B cell (primary cell): ENCODE measurements at regions of chr1 and their contacts with region 1.

Region 1: GRCh38 chr1:45490626-45491486 is at the start of gene TESK2:
- DNase-seq: peak; percentile 99
- ATAC-seq: peak; percentile 88
- H3K4me3 ChIP-seq: peak within 1 kb of the TSS; percentile 67 to 88 (median 83)
- H3K4me3 Mint-ChIP-seq: no peak within 1 kb of the TSS
- H3K27ac ChIP-seq: peak within 1 kb of the TSS; percentile 60 to 80
- H3K27ac Mint-ChIP-seq: no peak within 1 kb of the TSS
- H3K4me1 ChIP-seq: peaks cover 28% of the 10 kb centered on the region in 2 donors
- H3K4me1 Mint-ChIP-seq: peaks cover 22% of the 10 kb centered on the region
- H3K27me3 ChIP-seq: no peaks in the 10 kb centered on the region
- H3K27me3 Mint-ChIP-seq: no peaks in the 10 kb centered on the region
- CTCF ChIP-seq: peak; percentile 7
- total RNA-seq, gene TESK2: 26.2 and 27.0 TPM in 2 replicates

Region 2: DNA sequence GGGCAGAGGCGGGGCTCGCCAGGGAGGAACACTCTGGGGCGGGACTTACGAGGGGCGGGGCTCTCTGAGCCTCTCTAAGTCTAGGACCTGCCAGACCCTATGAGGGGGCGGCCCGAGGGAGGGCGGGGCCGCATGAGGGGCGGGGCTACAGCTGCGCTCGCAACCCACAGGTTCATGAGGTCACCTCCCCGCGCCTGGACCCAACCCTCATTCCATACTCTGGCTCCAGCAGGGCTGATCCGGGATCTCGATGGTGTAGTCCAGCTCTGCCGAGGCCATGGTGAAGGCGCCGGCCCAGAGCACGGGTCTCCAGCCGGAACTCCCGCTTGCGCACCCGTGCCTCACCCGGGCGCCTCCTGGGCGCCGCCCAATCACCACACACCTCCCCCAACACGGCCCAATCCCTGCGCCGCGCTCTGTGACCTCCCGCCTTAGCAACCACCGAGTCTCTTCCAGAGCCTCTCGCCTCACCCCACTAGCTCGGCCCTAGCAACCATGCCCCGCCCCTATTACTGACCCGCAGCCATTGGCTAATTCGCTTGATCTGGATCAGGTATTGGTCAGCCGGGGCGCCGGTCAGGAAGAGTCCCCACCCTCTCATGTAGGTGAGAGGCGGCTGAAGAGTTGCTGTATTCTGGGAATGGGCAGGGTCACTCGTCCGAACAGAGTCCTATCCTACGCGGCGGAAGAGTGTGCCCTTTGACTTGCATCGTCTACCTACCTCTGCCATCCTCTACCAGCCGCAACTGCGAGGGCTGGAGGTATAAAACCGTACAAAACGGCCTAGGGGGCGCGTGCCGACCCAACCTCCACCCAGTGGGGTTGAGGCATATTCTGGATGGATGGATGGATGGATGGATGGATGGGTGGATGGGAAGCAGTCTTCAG is 816.5 kb before region 1 on chr1 and contains the starts of genes ARMH1 and TMEM53:
- CTCF ChIA-PET with region 1: no interaction called
- POLR2A ChIA-PET with region 1: no interaction called
- intact Hi-C with region 1: loop called (anchors 1 kb)
- DNase-seq: peak; percentile 99
- ATAC-seq: peak; percentile 91
- H3K4me3 ChIP-seq: peak within 1 kb of the TSS; percentile 70 to 88 (median 84)
- H3K4me3 Mint-ChIP-seq: peak within 1 kb of the TSS; percentile 91
- H3K27ac ChIP-seq: peak within 1 kb of the TSS; percentile 87 to 94
- H3K27ac Mint-ChIP-seq: peak within 1 kb of the TSS; percentile 96
- H3K4me1 ChIP-seq: peaks cover 34 to 50% of the 10 kb centered on the region in 2 donors
- H3K4me1 Mint-ChIP-seq: peaks cover 35% of the 10 kb centered on the region
- H3K27me3 ChIP-seq: no peaks in the 10 kb centered on the region
- H3K27me3 Mint-ChIP-seq: no peaks in the 10 kb centered on the region
- CTCF ChIP-seq: no peak
- total RNA-seq, gene ARMH1: 10.2 and 11.4 TPM in 2 replicates
- total RNA-seq, gene TMEM53: 5.3 and 6.8 TPM in 2 replicates

Region 3: DNA sequence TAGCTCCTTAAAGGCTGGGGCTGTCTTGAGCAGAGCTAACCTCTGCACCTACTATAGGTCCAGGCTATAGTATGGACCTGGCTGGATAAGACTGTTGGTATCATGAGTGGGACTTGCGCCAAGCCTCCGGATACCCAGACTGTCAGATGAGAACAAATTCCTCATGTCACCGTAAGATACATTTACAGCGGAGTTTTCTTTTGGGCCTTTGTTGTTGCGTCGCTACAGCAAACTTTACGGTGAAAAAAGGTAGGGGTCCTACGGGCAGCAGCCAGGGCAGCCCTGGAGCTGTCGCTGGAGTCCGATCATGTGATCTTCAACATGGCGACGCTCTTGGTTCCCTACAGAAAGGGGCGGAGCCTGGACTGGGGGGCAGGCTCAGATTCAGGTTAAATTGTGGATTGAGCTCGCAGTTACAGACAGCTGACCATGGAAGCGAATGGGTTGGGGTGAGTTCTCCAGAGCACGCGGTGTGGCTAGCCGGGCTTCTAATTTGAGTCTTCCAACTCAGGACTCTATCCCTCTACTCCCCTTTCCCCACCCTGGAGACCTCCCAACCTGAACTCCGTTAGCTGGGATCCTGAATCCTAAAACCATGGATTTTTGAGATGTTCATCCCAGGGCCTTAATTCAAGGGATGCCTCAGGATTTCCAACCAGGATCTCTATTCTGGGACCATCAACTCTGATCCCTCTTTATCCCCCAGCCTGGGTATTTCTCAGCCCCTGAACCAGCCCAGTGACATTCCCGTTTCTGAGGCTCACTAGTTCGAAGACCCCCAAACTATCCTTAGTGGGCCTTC is 478.8 kb before region 1 on chr1 and contains the start of gene UROD:
- CTCF ChIA-PET with region 1: interaction called, 154 read pairs
- POLR2A ChIA-PET with region 1: interaction called, 5 read pairs
- intact Hi-C with region 1: no loop called
- DNase-seq: peak; percentile 94
- ATAC-seq: peak; percentile 83
- H3K4me3 ChIP-seq: peak within 1 kb of the TSS; percentile 59 to 89 (median 78)
- H3K4me3 Mint-ChIP-seq: peak within 1 kb of the TSS; percentile 91
- H3K27ac ChIP-seq: peak within 1 kb of the TSS; percentile 66 to 79
- H3K27ac Mint-ChIP-seq: peak within 1 kb of the TSS; percentile 89
- H3K4me1 ChIP-seq: peaks cover 31 to 42% of the 10 kb centered on the region in 2 donors
- H3K4me1 Mint-ChIP-seq: peaks cover 43% of the 10 kb centered on the region
- H3K27me3 ChIP-seq: no peaks in the 10 kb centered on the region
- H3K27me3 Mint-ChIP-seq: no peaks in the 10 kb centered on the region
- CTCF ChIP-seq: no peak
- total RNA-seq, gene UROD: 57.3 and 65.5 TPM in 2 replicates

Region 4: DNA sequence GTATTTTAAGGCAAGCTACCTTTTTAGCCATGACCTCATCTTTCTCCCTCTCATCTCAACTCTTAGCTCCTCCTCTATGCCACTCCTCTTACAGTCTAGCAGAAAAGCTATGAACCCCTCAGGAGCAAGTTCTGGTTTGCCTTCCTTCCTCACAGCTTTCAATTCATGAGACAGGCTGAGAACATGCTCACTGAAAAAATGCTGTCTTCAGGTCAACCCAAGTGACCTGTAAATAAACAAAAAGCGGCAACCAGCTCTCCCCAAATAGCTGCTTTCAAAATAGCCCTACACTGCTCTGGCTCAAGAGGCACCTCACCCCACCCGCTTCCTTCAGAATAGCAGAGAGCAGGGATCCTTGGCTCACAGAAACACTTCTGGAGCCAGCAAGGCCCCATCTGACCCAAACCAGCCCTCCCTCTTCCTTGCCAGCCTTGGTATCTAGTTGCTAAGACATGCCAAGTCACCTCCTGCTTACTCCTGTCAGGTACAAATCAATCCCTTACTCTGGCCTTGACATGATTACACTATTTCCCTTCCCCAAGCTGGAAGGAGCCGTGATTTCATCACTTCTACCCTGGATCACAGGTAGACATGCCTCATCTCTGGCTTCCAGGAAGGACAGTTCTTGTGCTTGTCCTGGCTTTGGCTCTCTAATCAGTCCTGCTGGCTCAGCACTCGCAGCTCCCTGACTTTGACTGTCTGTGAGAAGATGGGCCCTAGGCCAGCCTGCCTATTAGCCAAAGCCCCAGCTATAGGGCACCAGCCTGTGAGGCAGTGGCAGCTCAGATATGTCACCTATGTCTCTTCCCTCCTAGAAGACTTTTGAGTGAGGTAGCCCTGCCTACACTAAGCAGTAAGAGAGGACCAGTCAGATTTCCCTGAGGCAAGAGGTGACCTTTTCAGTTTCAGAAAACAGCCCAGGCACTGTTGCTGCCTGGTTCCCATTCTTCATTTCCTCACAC is 141.9 kb before region 1 on chr1:
- CTCF ChIA-PET with region 1: interaction called, 478 read pairs
- POLR2A ChIA-PET with region 1: no interaction called
- intact Hi-C with region 1: no loop called
- DNase-seq: no peak
- ATAC-seq: no peak
- H3K4me3 ChIP-seq: no peak overlapping the region
- H3K4me3 Mint-ChIP-seq: no peak overlapping the region
- H3K27ac ChIP-seq: no peak overlapping the region
- H3K27ac Mint-ChIP-seq: peak overlapping the region; percentile 15
- H3K4me1 ChIP-seq: no peaks in the 10 kb centered on the region
- H3K4me1 Mint-ChIP-seq: no peaks in the 10 kb centered on the region
- H3K27me3 ChIP-seq: no peaks in the 10 kb centered on the region
- H3K27me3 Mint-ChIP-seq: no peaks in the 10 kb centered on the region
- CTCF ChIP-seq: no peak

Region 5: DNA sequence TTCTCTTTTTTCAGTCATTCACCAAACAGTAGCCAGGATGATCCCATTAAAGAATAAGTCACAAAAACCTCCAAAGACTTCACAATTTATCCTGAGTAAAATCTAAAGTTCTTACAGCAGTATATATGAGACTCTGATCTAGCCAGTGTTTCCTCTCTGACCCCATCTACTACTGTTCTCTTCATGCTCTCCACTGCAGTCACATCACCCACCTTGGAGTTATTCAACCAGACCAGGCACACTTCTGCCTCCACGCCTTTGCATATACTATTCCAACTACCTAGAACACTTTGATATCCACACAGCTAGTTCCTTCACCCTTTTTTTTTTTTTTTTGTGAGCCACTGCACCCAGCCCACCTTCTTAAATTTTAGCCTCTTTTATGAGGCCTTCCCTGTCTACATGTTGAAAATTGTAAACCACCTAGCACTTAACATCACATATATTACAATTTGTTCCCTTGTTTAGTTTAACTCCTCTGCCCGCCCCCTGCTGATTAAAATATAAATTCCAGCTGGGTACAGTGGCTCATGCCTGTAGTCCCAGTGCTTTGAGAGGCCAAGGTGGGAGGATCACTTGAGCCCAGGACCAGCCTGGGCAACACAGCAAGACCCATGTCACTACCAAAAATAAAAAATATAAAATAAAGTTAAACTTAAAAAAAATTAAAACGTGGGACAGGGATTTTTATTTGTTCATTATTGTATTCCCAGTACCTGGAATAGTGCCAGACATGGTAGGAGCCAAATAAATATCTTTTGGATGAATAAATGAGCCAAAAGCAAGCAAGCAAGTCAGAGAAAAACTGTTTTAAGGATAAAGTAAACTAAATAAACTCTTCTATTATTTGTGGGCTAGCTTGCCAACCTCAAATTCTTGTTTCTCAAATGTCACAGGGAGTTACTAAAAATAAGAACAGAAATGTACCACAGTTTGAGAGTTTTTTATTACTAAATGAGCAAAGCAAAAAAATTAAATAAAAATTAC is 115.5 kb before region 1 on chr1:
- CTCF ChIA-PET with region 1: interaction called, 13 read pairs
- POLR2A ChIA-PET with region 1: no interaction called
- intact Hi-C with region 1: no loop called
- DNase-seq: no peak
- ATAC-seq: no peak
- H3K4me3 ChIP-seq: no peak overlapping the region
- H3K4me3 Mint-ChIP-seq: no peak overlapping the region
- H3K27ac ChIP-seq: peak overlapping the region in 1 of 2 donors; percentile 40
- H3K27ac Mint-ChIP-seq: peak overlapping the region; percentile 29
- H3K4me1 ChIP-seq: peaks cover 25 to 33% of the 10 kb centered on the region in 2 donors
- H3K4me1 Mint-ChIP-seq: peaks cover 38% of the 10 kb centered on the region
- H3K27me3 ChIP-seq: no peaks in the 10 kb centered on the region
- H3K27me3 Mint-ChIP-seq: no peaks in the 10 kb centered on the region
- CTCF ChIP-seq: no peak

Region 6: GRCh38 chr1:45430490-45430889 is 60.4 kb before region 1 on chr1:
- CTCF ChIA-PET with region 1: interaction called, 11 read pairs
- POLR2A ChIA-PET with region 1: interaction called, 6 read pairs
- intact Hi-C with region 1: no loop called
- DNase-seq: no peak
- ATAC-seq: peak; percentile 14
- H3K4me3 ChIP-seq: no peak overlapping the region
- H3K4me3 Mint-ChIP-seq: peak overlapping the region; percentile 55
- H3K27ac ChIP-seq: peak overlapping the region in 1 of 2 donors; percentile 51
- H3K27ac Mint-ChIP-seq: peak overlapping the region; percentile 89
- H3K4me1 ChIP-seq: peaks cover 7 to 14% of the 10 kb centered on the region in 2 donors
- H3K4me1 Mint-ChIP-seq: peaks cover 19% of the 10 kb centered on the region
- H3K27me3 ChIP-seq: no peaks in the 10 kb centered on the region
- H3K27me3 Mint-ChIP-seq: no peaks in the 10 kb centered on the region
- CTCF ChIP-seq: no peak

Region 7: DNA sequence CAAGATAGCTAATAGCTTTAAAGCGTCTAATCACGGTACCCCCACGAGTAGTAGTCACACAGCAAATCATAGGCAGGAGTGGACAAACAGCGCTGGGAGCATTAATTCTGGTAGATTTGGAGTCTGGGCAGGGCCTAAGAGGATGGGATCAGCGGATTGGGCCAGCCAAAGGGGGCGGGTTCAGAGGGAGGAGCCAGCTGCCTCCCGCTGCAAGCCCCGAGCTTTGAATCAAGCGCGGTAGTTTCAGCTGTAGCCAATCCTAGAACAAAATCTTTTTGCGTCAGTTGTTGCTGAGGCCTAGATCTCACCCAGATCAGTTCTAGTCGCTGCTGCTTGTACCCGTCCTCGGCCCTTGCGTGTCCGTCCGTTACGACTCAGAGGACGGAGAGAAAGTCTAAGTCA is 92.4 kb after region 1 on chr1:
- CTCF ChIA-PET with region 1: interaction called, 15 read pairs
- POLR2A ChIA-PET with region 1: interaction called, 12 read pairs
- intact Hi-C with region 1: loop called (anchors 1 kb)
- DNase-seq: peak; percentile 98
- ATAC-seq: peak; percentile 75
- H3K4me3 ChIP-seq: peak overlapping the region; percentile 91 to 100 (median 97)
- H3K4me3 Mint-ChIP-seq: peak overlapping the region; percentile 99
- H3K27ac ChIP-seq: peak overlapping the region; percentile 80 to 82
- H3K27ac Mint-ChIP-seq: peak overlapping the region; percentile 97
- H3K4me1 ChIP-seq: peaks cover 40 to 49% of the 10 kb centered on the region in 2 donors
- H3K4me1 Mint-ChIP-seq: peaks cover 41% of the 10 kb centered on the region
- H3K27me3 ChIP-seq: no peaks in the 10 kb centered on the region
- H3K27me3 Mint-ChIP-seq: no peaks in the 10 kb centered on the region
- CTCF ChIP-seq: no peak

Region 8: GRCh38 chr1:45864167-45865106 is 373.6 kb after region 1 on chr1:
- CTCF ChIA-PET with region 1: no interaction called
- POLR2A ChIA-PET with region 1: no interaction called
- intact Hi-C with region 1: no loop called
- DNase-seq: no peak
- ATAC-seq: no peak
- H3K4me3 ChIP-seq: no peak overlapping the region
- H3K4me3 Mint-ChIP-seq: no peak overlapping the region
- H3K27ac ChIP-seq: no peak overlapping the region
- H3K27ac Mint-ChIP-seq: no peak overlapping the region
- H3K4me1 ChIP-seq: no peaks in the 10 kb centered on the region
- H3K4me1 Mint-ChIP-seq: peaks cover 5% of the 10 kb centered on the region
- H3K27me3 ChIP-seq: no peaks in the 10 kb centered on the region
- H3K27me3 Mint-ChIP-seq: no peaks in the 10 kb centered on the region
- CTCF ChIP-seq: no peak